Right cardiac atrium (tissue), 5 donors: ENCODE measurements at regions of chr13 and their contacts with region 1.

Region 1: DNA sequence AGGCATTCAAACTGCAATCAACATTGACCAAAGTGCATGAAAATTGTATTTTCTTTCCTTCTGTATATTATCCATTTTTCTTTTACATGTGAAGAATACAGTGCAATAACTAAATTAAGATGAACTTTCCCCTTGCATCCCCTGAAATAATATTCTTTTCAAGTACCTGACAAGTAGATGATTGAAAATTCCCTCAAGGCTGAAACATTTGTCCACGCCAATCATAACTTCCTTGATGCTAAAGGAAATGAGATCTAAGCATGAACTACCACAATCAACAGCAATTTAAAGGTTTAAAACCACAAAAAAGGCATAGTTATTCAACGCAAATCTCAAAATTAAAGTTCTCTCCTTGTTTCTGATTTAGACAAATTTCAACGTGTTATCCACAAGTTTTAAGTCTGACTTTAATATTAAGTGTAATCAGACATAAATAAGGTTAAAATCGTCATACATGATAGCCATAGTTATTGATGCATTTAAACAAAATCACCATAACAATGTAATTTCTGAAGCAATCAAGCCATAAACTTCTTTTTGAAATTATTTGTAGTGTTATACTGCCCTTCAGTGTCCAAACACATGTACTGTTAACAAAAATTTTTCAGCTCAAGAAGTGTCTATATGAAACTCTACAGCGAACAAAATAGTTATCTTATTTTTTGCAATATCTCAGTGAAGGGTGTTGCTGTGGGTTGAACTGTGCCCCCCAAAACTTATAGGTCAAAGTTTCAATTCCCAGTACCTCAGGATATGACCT is 169.5 kb downstream of the DCLK1 start:
- DNase-seq: no peak
- ATAC-seq: no peak
- H3K4me3 ChIP-seq: no peak overlapping the region
- H3K27ac ChIP-seq: no peak overlapping the region
- H3K4me1 ChIP-seq: peaks cover 2% of the 10 kb centered on the region
- H3K27me3 ChIP-seq: no peaks in the 10 kb centered on the region

Region 2: GRCh38 chr13:35468195-35468594 is 493.4 kb before region 1 on chr13:
- intact Hi-C with region 1: loop called in 1 of 4 experiments (anchors 10 kb)
- DNase-seq: no peak
- ATAC-seq: no peak
- H3K4me3 ChIP-seq: no peak overlapping the region
- H3K27ac ChIP-seq: no peak overlapping the region
- H3K4me1 ChIP-seq: no peaks in the 10 kb centered on the region
- H3K27me3 ChIP-seq: no peaks in the 10 kb centered on the region